ENCODE measurements at regions of chr1 and their contacts with region 1.

Region 1: GRCh38 chr1:48356901-48357300 is 115.1 kb downstream of the SPATA6 start:
- DNase-seq: no peak
- ATAC-seq: no peak

Region 2: GRCh38 chr1:48498096-48498791 is 141.3 kb after region 1 on chr1:
- intact Hi-C with region 1: loop called (anchors 10 kb)
- DNase-seq: peak; percentile 90
- ATAC-seq: peak; percentile 96

Measured in Right ventricle myocardium superior (tissue), 1 donor.